ENCODE measurements at regions of chr12 and their contacts with region 1.

Region 1: GRCh38 chr12:120361506-120362208 is 7.3 kb downstream of the MSI1 start:
- DNase-seq: peak; percentile 89 to 96 (median 95)
- H3K4me3 ChIP-seq: no peak overlapping the region
- H3K27ac ChIP-seq: no peak overlapping the region
- H3K4me1 ChIP-seq: peaks cover 0 to 3% (median 0%) of the 10 kb centered on the region in 3 donors
- H3K27me3 ChIP-seq: no peaks in the 10 kb centered on the region
- CTCF ChIP-seq: no peak

Region 2: GRCh38 chr12:120421701-120422100 is 60.0 kb after region 1 on chr12:
- intact Hi-C with region 1: loop called (anchors 10 kb)
- DNase-seq: no peak
- H3K4me3 ChIP-seq: no peak overlapping the region
- H3K27ac ChIP-seq: no peak overlapping the region
- H3K4me1 ChIP-seq: no peaks in the 10 kb centered on the region
- H3K27me3 ChIP-seq: no peaks in the 10 kb centered on the region
- CTCF ChIP-seq: no peak

Measured in kidney (tissue), 22 donors.